ENCODE measurements at regions of chr16 and their contacts with region 1.

Region 1: GRCh38 chr16:68131813-68132706 is 46.9 kb downstream of the NFATC3 start:
- DNase-seq: no peak
- ATAC-seq: peak; percentile 13 to 56
- H3K4me3 ChIP-seq: no peak overlapping the region
- H3K27ac ChIP-seq: peak overlapping the region; percentile 74 to 86 (median 82)
- H3K4me1 ChIP-seq: peaks cover 61 to 68% of the 10 kb centered on the region in 2 donors
- H3K27me3 ChIP-seq: no peaks in the 10 kb centered on the region
- CTCF ChIP-seq: no peak
- POLR2A ChIP-seq: no peak

Region 2: DNA sequence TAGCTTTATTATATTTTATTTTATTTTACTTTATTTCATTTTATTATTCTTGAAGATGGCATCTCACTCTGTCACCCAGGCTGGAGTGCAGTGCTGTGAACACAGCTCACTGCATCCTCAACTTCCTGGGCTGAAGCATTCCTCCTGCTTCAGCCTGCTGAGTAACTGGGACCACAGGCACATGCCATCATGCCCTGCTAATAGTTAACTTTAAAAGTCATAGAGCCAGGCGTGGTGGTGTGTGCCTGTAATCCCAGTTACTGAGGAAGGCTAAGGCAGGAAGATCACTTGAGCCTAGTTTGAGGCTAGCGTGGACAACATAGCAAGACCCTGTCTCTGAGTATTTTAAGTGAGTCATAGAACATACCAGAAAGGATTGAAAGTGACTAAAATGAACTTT is 65.2 kb after region 1 on chr16:
- in situ Hi-C with region 1: no loop called
- intact Hi-C with region 1: loop called (anchors 5 kb)
- DNase-seq: no peak
- ATAC-seq: no peak
- H3K4me3 ChIP-seq: no peak overlapping the region
- H3K27ac ChIP-seq: peak overlapping the region; percentile 44 to 60 (median 52)
- H3K4me1 ChIP-seq: peaks cover 22 to 23% of the 10 kb centered on the region in 2 donors
- H3K27me3 ChIP-seq: no peaks in the 10 kb centered on the region
- CTCF ChIP-seq: no peak
- POLR2A ChIP-seq: no peak